Activated naive CD4-positive, alpha-beta T cell treated with anti-CD3 and anti-CD28 coated beads for 36 hours (primary cell): ENCODE measurements at regions of chr17 and their contacts with region 1.

Region 1: GRCh38 chr17:80195731-80196529 is 24.2 kb downstream of the SGSH start:
- DNase-seq: peak; percentile 57
- H3K4me3 Mint-ChIP-seq: no peak overlapping the region
- H3K27ac Mint-ChIP-seq: no peak overlapping the region
- H3K4me1 Mint-ChIP-seq: no peaks in the 10 kb centered on the region
- H3K27me3 Mint-ChIP-seq: no peaks in the 10 kb centered on the region

Region 2: GRCh38 chr17:80082403-80083135 is 113.4 kb before region 1 on chr17:
- CTCF ChIA-PET with region 1: interaction called, 5 read pairs
- intact Hi-C with region 1: loop called (anchors 5 kb)
- DNase-seq: peak; percentile 76
- H3K4me3 Mint-ChIP-seq: no peak overlapping the region
- H3K27ac Mint-ChIP-seq: no peak overlapping the region
- H3K4me1 Mint-ChIP-seq: peaks cover 3% of the 10 kb centered on the region
- H3K27me3 Mint-ChIP-seq: no peaks in the 10 kb centered on the region

Region 3: GRCh38 chr17:80101011-80101945 is 94.7 kb before region 1 on chr17 and contains the start of gene GAA:
- CTCF ChIA-PET with region 1: interaction called, 10 read pairs
- intact Hi-C with region 1: no loop called
- DNase-seq: peak; percentile 84
- H3K4me3 Mint-ChIP-seq: peak within 1 kb of the TSS; percentile 92
- H3K27ac Mint-ChIP-seq: peak within 1 kb of the TSS; percentile 59
- H3K4me1 Mint-ChIP-seq: peaks cover 28% of the 10 kb centered on the region
- H3K27me3 Mint-ChIP-seq: no peaks in the 10 kb centered on the region
- total RNA-seq, gene GAA: 32.1 to 33.2 TPM

Region 4: GRCh38 chr17:80138856-80139426 is 57.0 kb before region 1 on chr17:
- CTCF ChIA-PET with region 1: no interaction called
- intact Hi-C with region 1: no loop called
- DNase-seq: no peak
- H3K4me3 Mint-ChIP-seq: no peak overlapping the region
- H3K27ac Mint-ChIP-seq: no peak overlapping the region
- H3K4me1 Mint-ChIP-seq: peaks cover 3% of the 10 kb centered on the region
- H3K27me3 Mint-ChIP-seq: no peaks in the 10 kb centered on the region

Region 5: GRCh38 chr17:80158846-80159245 is 37.1 kb before region 1 on chr17:
- CTCF ChIA-PET with region 1: interaction called, 11 read pairs
- intact Hi-C with region 1: no loop called
- DNase-seq: no peak
- H3K4me3 Mint-ChIP-seq: no peak overlapping the region
- H3K27ac Mint-ChIP-seq: no peak overlapping the region
- H3K4me1 Mint-ChIP-seq: no peaks in the 10 kb centered on the region
- H3K27me3 Mint-ChIP-seq: peaks cover 2% of the 10 kb centered on the region

Region 6: GRCh38 chr17:80364216-80364618 is 168.3 kb after region 1 on chr17:
- CTCF ChIA-PET with region 1: interaction called, 7 read pairs
- intact Hi-C with region 1: loop called (anchors 5 kb)
- DNase-seq: peak; percentile 54
- H3K4me3 Mint-ChIP-seq: no peak overlapping the region
- H3K27ac Mint-ChIP-seq: no peak overlapping the region
- H3K4me1 Mint-ChIP-seq: no peaks in the 10 kb centered on the region
- H3K27me3 Mint-ChIP-seq: no peaks in the 10 kb centered on the region

Region 7: GRCh38 chr17:80414803-80415625 is 219.1 kb after region 1 on chr17 and contains the start of gene ENDOV:
- CTCF ChIA-PET with region 1: no interaction called
- intact Hi-C with region 1: loop called (anchors 2 kb)
- DNase-seq: peak; percentile 93
- H3K4me3 Mint-ChIP-seq: peak within 1 kb of the TSS; percentile 83
- H3K27ac Mint-ChIP-seq: no peak within 1 kb of the TSS
- H3K4me1 Mint-ChIP-seq: peaks cover 20% of the 10 kb centered on the region
- H3K27me3 Mint-ChIP-seq: peaks cover 9% of the 10 kb centered on the region
- total RNA-seq, gene ENDOV: 9.0 to 11.7 TPM

Region 8: GRCh38 chr17:81682565-81683207 is 1486.8 kb after region 1 on chr17:
- CTCF ChIA-PET with region 1: no interaction called
- intact Hi-C with region 1: no loop called
- DNase-seq: no peak
- H3K4me3 Mint-ChIP-seq: peak overlapping the region; percentile 87
- H3K27ac Mint-ChIP-seq: no peak overlapping the region
- H3K4me1 Mint-ChIP-seq: peaks cover 36% of the 10 kb centered on the region
- H3K27me3 Mint-ChIP-seq: no peaks in the 10 kb centered on the region